ENCODE measurements at regions of chr3 and their contacts with region 1.

Region 1: GRCh38 chr3:124281453-124282316 is 289.8 kb upstream of the ROPN1 start:
- DNase-seq: no peak
- ATAC-seq: peak; percentile 53 to 71

Region 2: DNA sequence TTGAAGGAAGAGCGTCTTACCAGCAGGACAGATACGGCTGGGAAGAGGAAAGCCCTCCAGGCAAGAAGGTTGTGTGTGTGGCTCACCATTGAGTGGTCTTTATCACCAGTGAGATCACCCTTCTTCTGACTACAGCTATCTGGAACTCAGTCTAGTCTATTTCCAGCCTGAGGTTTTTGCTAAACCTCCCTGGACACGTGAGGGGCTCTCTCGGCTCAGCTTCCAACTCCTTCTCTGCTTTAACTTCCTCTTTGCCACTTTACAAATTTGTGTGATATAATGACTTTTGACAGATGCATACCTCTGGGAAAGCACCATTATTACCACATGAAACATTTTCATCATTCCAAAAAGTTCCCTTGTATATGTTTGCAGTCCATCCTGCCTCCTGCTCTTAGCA is 274.5 kb before region 1 on chr3:
- intact Hi-C with region 1: loop called in 1 of 2 experiments (anchors 2 kb)
- DNase-seq: no peak
- ATAC-seq: no peak

Region 3: DNA sequence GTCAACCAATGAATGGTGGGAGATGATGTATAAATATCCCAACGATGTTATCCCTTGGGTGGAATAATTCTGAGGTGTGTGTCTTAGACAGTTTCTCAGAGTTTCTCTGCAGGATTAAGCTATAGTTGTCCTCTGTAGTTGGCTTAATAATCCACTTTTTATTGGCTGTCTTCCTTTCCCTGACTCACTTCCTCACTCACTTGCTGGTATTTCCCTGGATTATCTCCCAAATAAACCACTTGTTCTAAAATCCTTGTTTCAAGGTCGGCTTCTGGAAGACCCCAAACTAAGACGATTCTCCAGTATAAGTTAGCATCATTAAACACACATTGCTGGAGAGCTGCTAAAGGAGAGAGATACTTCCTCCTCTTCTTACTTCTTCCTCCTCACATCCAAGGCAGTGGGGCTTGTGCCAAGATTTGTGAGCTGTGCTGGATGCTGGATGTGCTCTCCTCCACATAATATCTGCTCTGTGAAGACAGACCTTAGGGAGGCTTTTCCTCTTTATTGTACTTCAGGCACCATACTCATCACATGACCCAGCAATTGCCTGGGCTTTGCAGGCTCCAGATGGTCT is 267.2 kb before region 1 on chr3:
- intact Hi-C with region 1: loop called (anchors 2 kb)
- DNase-seq: peak; percentile 27
- ATAC-seq: peak in 1 of 2 donors; percentile 56

Region 4: DNA sequence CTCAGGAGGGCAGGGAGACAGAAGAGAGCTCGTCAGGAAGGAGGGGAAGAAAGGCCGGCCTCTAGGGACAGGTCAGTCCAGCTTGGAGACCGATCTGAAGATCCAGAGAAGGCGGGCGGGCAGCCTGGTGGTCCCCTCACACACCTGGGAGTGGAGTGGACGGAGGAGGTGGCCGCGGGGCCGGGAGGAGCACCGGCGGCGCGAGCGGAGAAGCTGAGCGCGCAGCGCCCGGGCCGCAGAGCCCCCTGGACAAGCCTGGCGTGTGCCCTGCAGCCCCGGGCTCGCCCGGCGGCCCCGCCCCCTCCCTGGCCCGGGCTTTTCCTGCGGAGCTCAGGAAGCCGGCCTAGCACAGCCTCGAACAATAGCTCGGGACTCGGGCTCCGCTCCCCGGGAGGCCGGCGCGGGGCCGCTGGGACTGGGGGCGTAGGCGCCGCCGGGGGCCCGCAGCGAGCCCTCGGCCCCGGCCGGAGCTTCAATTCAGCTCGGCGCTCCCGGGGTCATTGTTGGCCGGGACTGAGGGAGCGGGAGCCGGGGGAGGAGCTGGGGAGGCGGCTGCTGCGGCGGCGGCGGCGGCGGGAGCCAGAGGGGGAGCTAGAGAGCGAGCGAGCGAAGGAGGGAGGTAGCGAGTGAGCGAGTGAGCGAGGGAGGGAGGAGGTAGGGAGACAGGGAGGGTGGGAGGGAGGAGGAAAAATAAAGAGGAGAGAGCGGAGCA is 248.9 kb before region 1 on chr3:
- intact Hi-C with region 1: loop called (anchors 5 kb)
- DNase-seq: peak; percentile 85
- ATAC-seq: peak; percentile 94 to 95

Region 5: DNA sequence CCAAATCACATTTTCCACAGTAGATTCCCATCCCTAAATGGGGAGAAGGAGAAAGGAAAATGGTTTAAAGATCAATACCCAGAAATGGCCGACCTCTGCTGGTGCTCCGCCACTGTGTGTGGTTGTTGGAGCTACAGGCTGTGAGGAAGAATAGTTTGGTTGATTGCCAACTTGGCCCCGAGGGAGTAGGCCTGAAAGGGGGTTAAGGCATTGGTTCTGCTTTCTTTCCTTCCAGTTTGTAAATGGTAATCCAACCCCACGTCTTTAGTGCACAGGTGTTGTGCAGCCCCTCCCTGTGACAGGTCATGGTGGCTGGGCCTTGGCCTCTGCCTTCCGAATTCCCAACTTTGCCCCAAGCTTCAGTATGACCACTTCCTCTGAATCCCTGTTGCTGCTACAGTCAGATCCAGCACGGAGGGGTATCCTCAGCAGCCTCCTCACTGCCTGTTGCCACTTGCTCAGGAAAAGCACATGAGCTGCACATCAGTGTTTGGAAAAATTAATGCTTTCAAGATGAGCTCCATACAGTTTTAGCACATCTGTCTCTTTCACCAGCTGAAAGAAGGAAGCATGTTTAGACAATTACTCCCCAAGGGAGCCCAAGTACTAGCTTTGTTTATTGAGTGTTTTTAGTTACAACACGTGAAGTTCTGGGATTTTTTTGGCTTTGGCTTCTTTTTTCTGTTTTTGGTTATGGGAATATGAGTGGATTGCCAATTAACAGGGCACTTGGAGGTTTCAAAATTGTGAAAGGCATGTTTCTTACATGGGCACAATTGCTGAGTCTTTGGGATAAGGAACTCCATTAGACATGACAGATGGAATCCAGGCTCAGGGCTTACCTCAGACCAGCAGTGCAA is 197.4 kb before region 1 on chr3:
- intact Hi-C with region 1: loop called (anchors 5 to 10 kb)
- DNase-seq: no peak
- ATAC-seq: peak; percentile 29 to 59

Region 6: GRCh38 chr3:124248471-124249028 is 33.1 kb before region 1 on chr3:
- intact Hi-C with region 1: loop called in 1 of 2 experiments (anchors 2 kb)
- DNase-seq: peak; percentile 58
- ATAC-seq: peak; percentile 71 to 91

Region 7: GRCh38 chr3:124451630-124452317 is 170.1 kb after region 1 on chr3:
- intact Hi-C with region 1: no loop called
- DNase-seq: no peak
- ATAC-seq: no peak

Measured in left cardiac atrium (tissue), 4 donors.